CD8-positive, alpha-beta T cell (primary cell): ENCODE measurements at regions of chr15 and their contacts with region 1.

Region 1: GRCh38 chr15:90677807-90678790 is 39.0 kb upstream of the BLM start:
- DNase-seq: peak in 2 of 9 experiments; percentile 35 to 65
- ATAC-seq: peak; percentile 78
- H3K4me3 ChIP-seq: no peak overlapping the region
- H3K4me3 Mint-ChIP-seq: peak overlapping the region; percentile 37
- H3K27ac ChIP-seq: no peak overlapping the region
- H3K27ac Mint-ChIP-seq: peak overlapping the region; percentile 24
- H3K4me1 ChIP-seq: peaks cover 31% of the 10 kb centered on the region
- H3K4me1 Mint-ChIP-seq: peaks cover 25% of the 10 kb centered on the region
- H3K27me3 ChIP-seq: peaks cover 0 to 5% of the 10 kb centered on the region in 2 experiments
- H3K27me3 Mint-ChIP-seq: no peaks in the 10 kb centered on the region
- CTCF ChIP-seq: no peak

Region 2: GRCh38 chr15:90660195-90660998 is 17.7 kb before region 1 on chr15:
- CTCF ChIA-PET with region 1: interaction called, 10 read pairs
- POLR2A ChIA-PET with region 1: interaction called, 3 read pairs
- intact Hi-C with region 1: loop called in 1 of 2 experiments (anchors 2 kb)
- DNase-seq: peak in 8 of 9 experiments; percentile 51 to 75 (median 72)
- ATAC-seq: peak; percentile 83
- H3K4me3 ChIP-seq: peak overlapping the region; percentile 32 to 70
- H3K4me3 Mint-ChIP-seq: peak overlapping the region; percentile 70
- H3K27ac ChIP-seq: no peak overlapping the region
- H3K27ac Mint-ChIP-seq: no peak overlapping the region
- H3K4me1 ChIP-seq: peaks cover 75% of the 10 kb centered on the region
- H3K4me1 Mint-ChIP-seq: peaks cover 83% of the 10 kb centered on the region
- H3K27me3 ChIP-seq: peaks cover 0 to 26% of the 10 kb centered on the region in 2 experiments
- H3K27me3 Mint-ChIP-seq: peaks cover 9% of the 10 kb centered on the region
- CTCF ChIP-seq: no peak

Region 3: DNA sequence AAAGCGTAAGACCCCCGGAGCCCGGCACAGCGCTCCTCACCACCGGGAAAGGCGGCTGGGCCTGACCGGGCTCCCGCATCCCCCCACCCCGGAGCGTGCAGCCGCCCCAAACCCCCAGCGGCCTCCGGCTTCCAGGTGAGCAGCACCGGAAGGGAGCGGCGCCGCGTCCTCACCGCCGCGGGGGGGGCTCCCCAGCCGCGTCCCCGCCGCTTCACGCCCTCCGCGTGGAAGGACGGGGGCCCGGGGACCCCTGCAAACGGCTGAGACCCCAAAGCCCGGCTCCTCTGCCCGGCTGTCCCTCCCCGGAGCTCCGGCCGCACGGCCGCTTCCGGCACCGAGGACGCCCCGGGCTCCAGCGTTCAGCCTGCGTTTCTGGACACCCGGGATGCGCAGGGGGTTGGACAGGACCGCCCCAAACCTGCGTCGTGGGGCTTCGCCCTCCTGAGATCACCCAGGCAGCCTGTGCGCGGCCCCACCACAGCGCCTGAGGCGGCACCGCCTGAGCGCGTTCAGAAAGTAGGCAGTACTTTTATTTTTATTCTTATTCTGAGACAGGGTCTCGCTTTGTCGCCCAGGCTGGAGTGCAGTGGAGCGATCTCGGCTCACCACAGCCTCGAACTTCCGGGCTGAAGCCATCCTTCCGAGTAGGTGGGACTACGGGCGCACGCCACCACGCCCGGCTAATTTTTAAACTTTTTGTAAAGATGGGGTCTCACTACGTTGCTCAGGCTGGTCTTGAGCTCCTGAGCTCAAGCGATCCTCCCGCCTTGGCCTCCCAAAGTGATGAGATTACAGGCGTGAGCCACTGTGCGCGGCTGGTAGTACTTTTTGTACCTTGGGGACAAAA is 12.6 kb before region 1 on chr15:
- CTCF ChIA-PET with region 1: interaction called, 10 read pairs
- POLR2A ChIA-PET with region 1: interaction called, 3 read pairs
- intact Hi-C with region 1: loop called in 1 of 2 experiments (anchors 2 kb)
- DNase-seq: peak in 7 of 9 experiments; percentile 26 to 61 (median 40)
- ATAC-seq: peak; percentile 63
- H3K4me3 ChIP-seq: peak overlapping the region; percentile 55 to 63
- H3K4me3 Mint-ChIP-seq: peak overlapping the region; percentile 81
- H3K27ac ChIP-seq: peak overlapping the region; percentile 43 to 55
- H3K27ac Mint-ChIP-seq: peak overlapping the region; percentile 58
- H3K4me1 ChIP-seq: peaks cover 52% of the 10 kb centered on the region
- H3K4me1 Mint-ChIP-seq: peaks cover 51% of the 10 kb centered on the region
- H3K27me3 ChIP-seq: peaks cover 0 to 17% of the 10 kb centered on the region in 2 experiments
- H3K27me3 Mint-ChIP-seq: peaks cover 3% of the 10 kb centered on the region
- CTCF ChIP-seq: no peak

Region 4: DNA sequence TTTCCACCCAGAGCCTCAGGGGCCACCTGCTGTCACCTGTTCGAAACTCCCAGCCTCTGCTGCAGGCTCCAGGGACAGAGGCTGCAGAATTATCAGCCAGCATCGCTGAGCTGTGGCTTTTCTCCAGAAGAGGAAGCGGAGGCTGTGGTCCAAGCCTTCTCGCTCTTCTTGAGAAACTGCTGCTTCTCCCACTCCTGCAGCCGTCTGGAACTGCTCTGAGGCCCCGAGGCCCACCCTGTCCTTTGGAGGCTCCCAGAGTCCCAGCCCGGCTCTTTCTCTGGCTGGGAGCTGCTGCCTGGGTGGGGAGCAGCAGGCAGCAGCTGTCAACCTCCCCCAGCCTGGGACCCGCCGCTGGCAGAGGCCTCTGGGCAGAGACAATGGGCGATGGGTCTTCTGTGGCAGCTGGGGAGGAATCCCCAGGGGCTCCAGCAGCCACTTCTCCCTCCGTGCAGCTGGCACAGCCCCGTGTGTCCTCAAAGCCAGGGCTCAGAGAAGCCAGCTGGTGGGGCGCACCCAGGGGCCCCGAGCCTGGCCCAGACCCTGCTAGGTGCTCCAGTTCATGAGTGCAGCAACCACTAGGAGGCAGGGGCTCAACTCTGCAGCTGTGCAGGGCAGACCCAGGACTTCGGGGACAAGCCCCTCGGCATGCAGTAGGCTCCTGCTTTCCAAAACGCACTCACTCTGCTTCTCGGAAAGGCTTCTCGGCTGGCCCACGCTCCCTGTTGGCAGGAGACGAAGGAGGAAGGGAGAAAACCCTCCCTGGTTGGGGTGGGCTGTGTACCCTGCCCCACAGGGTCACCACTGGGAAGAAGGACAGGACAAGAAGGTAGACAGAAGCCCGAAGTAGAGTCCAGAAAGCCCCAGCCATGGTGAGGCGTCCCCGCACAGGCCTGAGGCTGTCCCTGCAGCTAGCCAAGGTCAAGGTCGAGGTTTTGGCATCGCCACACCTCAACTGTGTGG is 140.4 kb after region 1 on chr15:
- CTCF ChIA-PET with region 1: no interaction called
- POLR2A ChIA-PET with region 1: no interaction called
- intact Hi-C with region 1: no loop called
- DNase-seq: peak in 5 of 9 experiments; percentile 27 to 60 (median 41)
- ATAC-seq: peak; percentile 64
- H3K4me3 ChIP-seq: no peak overlapping the region
- H3K4me3 Mint-ChIP-seq: peak overlapping the region; percentile 37
- H3K27ac ChIP-seq: no peak overlapping the region
- H3K27ac Mint-ChIP-seq: no peak overlapping the region
- H3K4me1 ChIP-seq: peaks cover 21% of the 10 kb centered on the region
- H3K4me1 Mint-ChIP-seq: peaks cover 36% of the 10 kb centered on the region
- H3K27me3 ChIP-seq: no peaks in the 10 kb centered on the region
- H3K27me3 Mint-ChIP-seq: no peaks in the 10 kb centered on the region
- CTCF ChIP-seq: peak; percentile 41